ENCODE measurements at regions of chr3 and their contacts with region 1.

Region 1: DNA sequence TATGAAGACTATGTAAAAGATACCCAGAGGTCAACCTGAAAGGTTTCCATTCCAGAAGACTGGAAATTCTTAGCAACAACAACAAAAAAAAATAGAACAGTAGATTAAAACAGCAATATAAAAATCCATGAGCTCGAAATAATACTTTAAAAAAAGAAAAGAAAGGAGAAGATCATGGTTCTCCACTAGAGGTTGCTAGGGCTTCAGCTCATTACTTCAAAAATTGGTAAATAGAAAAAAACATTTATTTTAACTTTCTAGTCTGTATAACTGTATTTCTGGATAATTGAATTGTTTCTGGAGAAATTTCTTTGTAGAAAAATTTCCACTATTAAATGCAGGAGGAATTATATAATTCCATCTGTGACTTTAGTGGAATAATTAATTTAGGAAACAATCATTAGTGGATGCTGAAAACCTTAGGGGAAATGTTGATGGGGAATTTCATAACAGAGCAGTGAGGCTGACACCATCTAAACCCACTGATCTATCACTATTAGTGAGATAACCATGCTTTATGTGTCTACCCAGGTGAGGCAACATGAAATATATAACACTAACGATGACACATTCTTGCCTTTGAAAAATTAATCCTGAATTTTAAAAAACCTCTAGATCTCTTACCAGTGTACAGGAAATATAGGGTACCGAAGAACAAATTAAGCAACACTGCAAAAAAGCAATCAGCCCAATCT is 62.5 kb upstream of the SNRK start:
- DNase-seq: peak in 4 of 9 donors; percentile 18 to 46 (median 38)
- ATAC-seq: peak; percentile 57
- H3K4me3 ChIP-seq: no peak overlapping the region
- H3K4me3 Mint-ChIP-seq: peak overlapping the region in 6 of 10 donors; percentile 20 to 77 (median 47)
- H3K27ac ChIP-seq: no peak overlapping the region
- H3K27ac Mint-ChIP-seq: peak overlapping the region in 7 of 9 donors; percentile 18 to 93 (median 87)
- H3K4me1 ChIP-seq: peaks cover 13 to 56% of the 10 kb centered on the region in 2 donors
- H3K4me1 Mint-ChIP-seq: peaks cover 25 to 67% (median 63%) of the 10 kb centered on the region in 7 donors
- H3K27me3 ChIP-seq: no peaks in the 10 kb centered on the region
- H3K27me3 Mint-ChIP-seq: no peaks in the 10 kb centered on the region

Region 2: DNA sequence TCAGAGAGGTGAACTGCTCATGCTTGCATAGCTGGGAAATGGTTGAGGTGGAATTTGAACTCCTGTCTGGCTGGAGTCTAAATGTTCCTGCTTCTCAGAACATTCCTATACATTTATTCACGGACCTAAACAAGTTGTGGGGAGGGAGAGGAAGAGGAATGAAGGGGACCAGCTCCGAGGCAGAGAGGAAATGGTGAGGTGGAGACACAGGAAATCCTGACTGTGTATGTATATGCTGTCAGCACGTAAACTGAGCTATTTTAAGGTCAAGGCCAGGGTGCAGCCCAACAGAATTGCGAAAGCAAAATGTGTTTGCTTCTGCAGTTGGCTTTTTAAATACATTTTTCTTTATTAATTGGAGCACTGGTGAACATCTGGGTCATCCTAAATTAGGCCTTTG is 43.8 kb before region 1 on chr3:
- CTCF ChIA-PET with region 1: interaction called, 3 read pairs
- POLR2A ChIA-PET with region 1: interaction called, 7 read pairs
- intact Hi-C with region 1: loop called in 1 of 2 experiments (anchors 5 kb)
- DNase-seq: peak in 7 of 9 donors; percentile 38 to 66 (median 61)
- ATAC-seq: peak; percentile 86
- H3K4me3 ChIP-seq: peak overlapping the region; percentile 37
- H3K4me3 Mint-ChIP-seq: peak overlapping the region; percentile 66 to 82 (median 79)
- H3K27ac ChIP-seq: peak overlapping the region; percentile 50
- H3K27ac Mint-ChIP-seq: peak overlapping the region; percentile 82 to 97 (median 93)
- H3K4me1 ChIP-seq: peaks cover 32 to 41% of the 10 kb centered on the region in 2 donors
- H3K4me1 Mint-ChIP-seq: peaks cover 47 to 76% (median 71%) of the 10 kb centered on the region in 7 donors
- H3K27me3 ChIP-seq: no peaks in the 10 kb centered on the region
- H3K27me3 Mint-ChIP-seq: no peaks in the 10 kb centered on the region

Region 3: GRCh38 chr3:43190666-43191065 is 33.2 kb before region 1 on chr3:
- CTCF ChIA-PET with region 1: interaction called, 4 read pairs
- POLR2A ChIA-PET with region 1: interaction called, 5 read pairs
- intact Hi-C with region 1: loop called in 1 of 2 experiments (anchors 1 kb)
- DNase-seq: no peak
- ATAC-seq: no peak
- H3K4me3 ChIP-seq: no peak overlapping the region
- H3K4me3 Mint-ChIP-seq: no peak overlapping the region
- H3K27ac ChIP-seq: no peak overlapping the region
- H3K27ac Mint-ChIP-seq: peak overlapping the region in 4 of 9 donors; percentile 1 to 66 (median 34)
- H3K4me1 ChIP-seq: peaks cover 32 to 46% of the 10 kb centered on the region in 2 donors
- H3K4me1 Mint-ChIP-seq: peaks cover 25 to 70% (median 58%) of the 10 kb centered on the region in 7 donors
- H3K27me3 ChIP-seq: no peaks in the 10 kb centered on the region
- H3K27me3 Mint-ChIP-seq: peaks cover 0 to 30% (median 0%) of the 10 kb centered on the region in 5 donors

Region 4: GRCh38 chr3:43246976-43247375 is 23.2 kb after region 1 on chr3:
- CTCF ChIA-PET with region 1: interaction called, 10 read pairs
- POLR2A ChIA-PET with region 1: interaction called, 8 read pairs
- intact Hi-C with region 1: no loop called
- DNase-seq: peak in 6 of 9 donors; percentile 33 to 62 (median 50)
- ATAC-seq: peak; percentile 66
- H3K4me3 ChIP-seq: no peak overlapping the region
- H3K4me3 Mint-ChIP-seq: peak overlapping the region; percentile 8 to 78 (median 61)
- H3K27ac ChIP-seq: peak overlapping the region; percentile 53
- H3K27ac Mint-ChIP-seq: peak overlapping the region; percentile 49 to 90 (median 80)
- H3K4me1 ChIP-seq: peaks cover 9 to 53% of the 10 kb centered on the region in 2 donors
- H3K4me1 Mint-ChIP-seq: peaks cover 35 to 69% (median 65%) of the 10 kb centered on the region in 7 donors
- H3K27me3 ChIP-seq: no peaks in the 10 kb centered on the region
- H3K27me3 Mint-ChIP-seq: peaks cover 0 to 4% (median 0%) of the 10 kb centered on the region in 5 donors

Region 5: DNA sequence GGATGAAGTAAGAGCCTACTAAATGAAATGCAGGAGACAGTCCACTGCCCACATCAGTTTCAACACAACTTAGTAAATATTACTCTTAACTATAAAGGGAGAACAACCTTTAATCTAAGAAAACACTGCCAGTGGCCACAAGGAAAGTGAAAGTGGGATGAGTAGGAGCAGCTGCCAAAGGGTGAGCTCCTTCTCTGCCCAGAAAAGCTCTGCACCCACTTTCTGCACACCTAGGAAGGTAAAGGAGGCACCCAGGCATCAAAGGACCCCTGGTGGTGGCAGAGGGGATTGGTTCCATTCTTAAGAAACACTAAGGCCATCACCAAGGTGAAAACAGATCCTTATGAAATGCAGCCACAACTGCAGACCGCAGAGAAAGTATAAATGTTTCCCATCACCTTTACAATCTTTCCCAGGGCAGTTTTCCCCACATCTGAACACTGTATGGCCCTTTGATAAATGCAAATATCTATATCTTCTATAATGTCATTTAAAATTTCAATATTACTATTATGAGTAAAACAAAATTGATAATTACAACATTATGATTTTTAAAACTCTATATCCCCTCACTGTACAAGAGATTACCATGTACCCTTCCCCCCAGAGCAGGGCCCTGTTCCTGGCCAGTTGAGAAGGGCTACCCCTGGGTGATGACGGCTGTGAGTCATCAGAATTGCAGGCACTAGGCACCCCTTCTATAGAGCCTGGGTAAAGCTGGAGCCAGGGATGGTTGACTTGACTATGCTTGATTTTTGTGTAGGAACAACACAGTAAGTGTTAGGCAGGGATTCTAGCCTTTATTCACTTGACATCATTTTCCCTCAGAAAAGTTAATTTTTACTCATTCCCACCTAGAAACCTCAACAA is 154.5 kb after region 1 on chr3:
- CTCF ChIA-PET with region 1: interaction called, 10 read pairs
- POLR2A ChIA-PET with region 1: interaction called, 4 read pairs
- intact Hi-C with region 1: loop called (anchors 1 kb)
- DNase-seq: peak; percentile 30 to 78 (median 71)
- ATAC-seq: peak; percentile 94
- H3K4me3 ChIP-seq: no peak overlapping the region
- H3K4me3 Mint-ChIP-seq: no peak overlapping the region
- H3K27ac ChIP-seq: no peak overlapping the region
- H3K27ac Mint-ChIP-seq: peak overlapping the region in 8 of 9 donors; percentile 26 to 88 (median 40)
- H3K4me1 ChIP-seq: peaks cover 6 to 10% of the 10 kb centered on the region in 2 donors
- H3K4me1 Mint-ChIP-seq: peaks cover 6 to 29% (median 19%) of the 10 kb centered on the region in 7 donors
- H3K27me3 ChIP-seq: no peaks in the 10 kb centered on the region
- H3K27me3 Mint-ChIP-seq: peaks cover 0 to 12% (median 0%) of the 10 kb centered on the region in 5 donors

Region 6: GRCh38 chr3:43503067-43503728 is 279.4 kb after region 1 on chr3:
- CTCF ChIA-PET with region 1: interaction called, 26 read pairs
- POLR2A ChIA-PET with region 1: interaction called, 4 read pairs
- intact Hi-C with region 1: loop called (anchors 1 kb)
- DNase-seq: peak in 6 of 9 donors; percentile 39 to 68 (median 59)
- ATAC-seq: peak; percentile 68
- H3K4me3 ChIP-seq: no peak overlapping the region
- H3K4me3 Mint-ChIP-seq: no peak overlapping the region
- H3K27ac ChIP-seq: no peak overlapping the region
- H3K27ac Mint-ChIP-seq: peak overlapping the region in 4 of 9 donors; percentile 2 to 49 (median 24)
- H3K4me1 ChIP-seq: peaks cover 17 to 18% of the 10 kb centered on the region in 2 donors
- H3K4me1 Mint-ChIP-seq: peaks cover 18 to 51% (median 48%) of the 10 kb centered on the region in 7 donors
- H3K27me3 ChIP-seq: no peaks in the 10 kb centered on the region
- H3K27me3 Mint-ChIP-seq: peaks cover 0 to 8% (median 0%) of the 10 kb centered on the region in 5 donors

Region 7: DNA sequence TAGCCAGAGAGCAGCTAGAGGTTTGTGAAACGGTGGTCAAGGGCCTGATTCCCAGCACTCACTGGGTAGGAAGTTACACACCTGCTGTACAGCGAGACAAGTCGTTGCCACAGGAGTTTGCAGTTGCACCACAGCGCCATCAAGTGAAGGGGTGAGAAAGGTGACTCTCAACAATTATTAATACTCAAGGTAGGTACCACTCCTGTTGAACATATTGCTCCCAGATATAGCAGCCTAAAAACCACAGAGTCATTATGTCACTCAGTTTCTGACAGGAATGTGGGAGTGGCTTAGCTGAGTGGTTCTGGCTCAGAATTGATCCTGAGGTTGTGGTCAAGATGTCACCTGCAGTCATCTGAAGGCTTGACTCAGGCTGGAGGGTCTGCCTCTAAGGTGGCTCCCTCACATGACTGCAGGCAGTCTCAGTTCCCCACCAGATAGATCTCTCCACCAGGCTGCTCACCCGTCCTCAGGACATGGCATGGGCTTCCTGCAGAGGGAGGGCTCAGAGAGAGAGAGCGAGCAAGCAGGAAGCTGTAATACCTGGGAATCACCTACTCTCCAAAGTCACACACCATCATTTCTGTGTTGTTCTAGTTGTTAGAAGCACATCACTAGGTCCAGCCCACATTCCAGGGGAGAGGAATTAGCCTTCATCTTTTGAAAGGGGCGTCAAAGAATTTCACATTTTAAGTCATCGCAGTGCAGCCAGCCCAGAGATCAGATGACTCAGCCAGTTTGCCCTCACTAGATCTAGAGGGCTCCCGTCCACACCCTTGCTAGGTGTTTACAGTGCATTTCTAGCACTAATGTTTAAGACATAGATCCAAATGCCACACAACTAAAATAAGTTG is 415.0 kb after region 1 on chr3:
- CTCF ChIA-PET with region 1: no interaction called
- POLR2A ChIA-PET with region 1: no interaction called
- intact Hi-C with region 1: no loop called
- DNase-seq: peak in 3 of 9 donors; percentile 7 to 12 (median 8)
- ATAC-seq: peak; percentile 45
- H3K4me3 ChIP-seq: no peak overlapping the region
- H3K4me3 Mint-ChIP-seq: no peak overlapping the region
- H3K27ac ChIP-seq: no peak overlapping the region
- H3K27ac Mint-ChIP-seq: no peak overlapping the region
- H3K4me1 ChIP-seq: no peaks in the 10 kb centered on the region
- H3K4me1 Mint-ChIP-seq: peaks cover 0 to 8% (median 0%) of the 10 kb centered on the region in 7 donors
- H3K27me3 ChIP-seq: no peaks in the 10 kb centered on the region
- H3K27me3 Mint-ChIP-seq: peaks cover 5 to 10% (median 7%) of the 10 kb centered on the region in 5 donors

Measured in naive thymus-derived CD4-positive, alpha-beta T cell (primary cell).